ENCODE measurements at regions of chr4 and their contacts with region 1.

Region 1: GRCh38 chr4:42596918-42597317 is 60.0 kb downstream of the ATP8A1 start:
- DNase-seq: no peak
- ATAC-seq: no peak
- H3K4me3 ChIP-seq: no peak overlapping the region
- H3K27ac ChIP-seq: no peak overlapping the region
- H3K4me1 ChIP-seq: no peaks in the 10 kb centered on the region
- H3K27me3 ChIP-seq: no peaks in the 10 kb centered on the region

Region 2: GRCh38 chr4:42656944-42657792 is 60.2 kb after region 1 on chr4 and contains the start of gene ATP8A1:
- intact Hi-C with region 1: loop called (anchors 5 to 10 kb)
- DNase-seq: peak; percentile 95 to 98 (median 98)
- ATAC-seq: peak; percentile 97 to 98
- H3K4me3 ChIP-seq: peak within 1 kb of the TSS; percentile 78
- H3K27ac ChIP-seq: peak within 1 kb of the TSS; percentile 81
- H3K4me1 ChIP-seq: peaks cover 12% of the 10 kb centered on the region
- H3K27me3 ChIP-seq: no peaks in the 10 kb centered on the region
- total RNA-seq, gene ATP8A1: 18.8 to 28.2 (median 23.1) TPM

Region 3: DNA sequence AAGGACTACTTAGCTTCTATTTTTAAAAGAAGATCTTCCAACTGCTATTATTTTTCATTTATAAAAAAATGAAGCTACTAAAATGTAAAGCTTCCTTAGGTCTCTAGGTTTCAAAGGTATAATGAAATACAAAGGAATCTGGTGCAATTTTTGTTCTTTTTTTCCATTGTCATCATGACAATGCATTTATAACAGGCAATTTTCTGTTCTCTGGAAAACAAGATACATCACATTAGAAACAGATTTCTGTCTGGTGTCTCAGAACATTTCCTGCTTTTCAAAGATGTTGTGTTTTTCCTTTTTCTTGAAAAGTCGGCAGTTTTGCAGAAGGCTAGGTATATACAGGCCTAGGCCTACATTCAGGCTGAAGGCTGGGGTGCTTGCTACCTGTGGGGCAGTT is 123.6 kb after region 1 on chr4:
- intact Hi-C with region 1: loop called in 1 of 4 experiments (anchors 10 kb)
- DNase-seq: no peak
- ATAC-seq: no peak
- H3K4me3 ChIP-seq: no peak overlapping the region
- H3K27ac ChIP-seq: no peak overlapping the region
- H3K4me1 ChIP-seq: no peaks in the 10 kb centered on the region
- H3K27me3 ChIP-seq: no peaks in the 10 kb centered on the region

Measured in right cardiac atrium (tissue), 5 donors.